Kidney (tissue), 22 donors: ENCODE measurements at regions of chr6 and their contacts with region 1.

Region 1: DNA sequence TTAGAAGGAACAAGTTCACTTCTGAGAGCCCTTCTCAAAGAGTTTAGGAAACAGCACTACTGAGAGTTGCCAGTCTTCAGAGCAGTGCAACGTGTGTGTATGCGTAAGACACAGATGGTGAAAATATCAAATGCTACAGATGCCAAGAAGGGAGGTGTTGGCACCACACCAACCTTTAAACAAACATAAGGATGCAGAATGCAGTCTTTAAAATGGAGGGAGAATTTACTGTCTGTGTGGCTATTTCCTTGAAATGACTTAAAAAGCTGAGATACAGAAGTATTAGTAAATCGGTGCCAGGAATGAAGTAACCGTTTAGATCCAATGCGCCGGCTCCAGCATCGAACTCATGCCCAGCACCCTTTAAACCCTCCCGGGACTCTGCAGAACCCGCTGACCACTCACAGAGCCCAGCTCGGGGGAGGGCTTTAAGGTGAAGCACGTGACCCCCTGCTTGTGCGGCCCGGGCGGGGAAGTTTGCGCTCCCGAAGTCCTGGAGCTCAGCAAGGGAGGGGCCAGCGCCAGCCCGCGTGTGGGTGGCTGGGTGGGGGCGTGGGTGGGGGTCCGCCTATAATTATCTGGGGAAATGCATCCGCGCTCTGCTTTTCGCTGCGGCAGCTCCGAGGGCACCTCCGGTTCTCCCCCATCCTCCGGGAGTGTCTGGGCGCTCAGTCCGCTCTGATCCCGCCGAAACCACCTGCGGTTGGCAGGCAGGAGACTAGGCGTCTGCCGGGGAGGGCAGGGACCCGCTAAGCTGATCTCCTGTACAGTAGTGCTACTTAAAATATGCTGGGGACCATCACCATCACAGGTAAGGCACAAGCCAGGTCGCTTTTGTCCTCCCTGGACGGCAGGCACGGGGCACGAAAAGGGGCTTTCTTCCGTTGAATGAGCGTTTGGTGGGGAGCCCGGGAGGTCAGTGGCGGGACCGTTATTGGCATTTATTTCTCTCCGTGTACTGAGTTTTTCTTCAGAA is 66.0 kb downstream of the ZBTB2 start:
- DNase-seq: peak; percentile 68 to 87 (median 76)
- H3K4me3 ChIP-seq: peak overlapping the region; percentile 58 to 73 (median 66)
- H3K27ac ChIP-seq: peak overlapping the region; percentile 44 to 68
- H3K4me1 ChIP-seq: peaks cover 0 to 8% (median 8%) of the 10 kb centered on the region in 3 donors
- H3K27me3 ChIP-seq: no peaks in the 10 kb centered on the region
- CTCF ChIP-seq: no peak

Region 2: GRCh38 chr6:150891888-150892485 is 433.4 kb before region 1 on chr6:
- intact Hi-C with region 1: loop called (anchors 5 kb)
- DNase-seq: peak in 4 of 5 donors; percentile 85 to 93 (median 88)
- H3K4me3 ChIP-seq: peak overlapping the region in 1 of 3 donors; percentile 1
- H3K27ac ChIP-seq: no peak overlapping the region
- H3K4me1 ChIP-seq: peaks cover 0 to 5% (median 3%) of the 10 kb centered on the region in 3 donors
- H3K27me3 ChIP-seq: no peaks in the 10 kb centered on the region
- CTCF ChIP-seq: peak; percentile 85

Region 3: GRCh38 chr6:151014404-151015100 is 310.8 kb before region 1 on chr6:
- intact Hi-C with region 1: loop called (anchors 5 kb)
- DNase-seq: peak; percentile 81 to 93 (median 87)
- H3K4me3 ChIP-seq: no peak overlapping the region
- H3K27ac ChIP-seq: peak overlapping the region in 1 of 2 donors; percentile 41
- H3K4me1 ChIP-seq: peaks cover 4% of the 10 kb centered on the region in 3 donors
- H3K27me3 ChIP-seq: no peaks in the 10 kb centered on the region
- CTCF ChIP-seq: peak; percentile 97

Region 4: DNA sequence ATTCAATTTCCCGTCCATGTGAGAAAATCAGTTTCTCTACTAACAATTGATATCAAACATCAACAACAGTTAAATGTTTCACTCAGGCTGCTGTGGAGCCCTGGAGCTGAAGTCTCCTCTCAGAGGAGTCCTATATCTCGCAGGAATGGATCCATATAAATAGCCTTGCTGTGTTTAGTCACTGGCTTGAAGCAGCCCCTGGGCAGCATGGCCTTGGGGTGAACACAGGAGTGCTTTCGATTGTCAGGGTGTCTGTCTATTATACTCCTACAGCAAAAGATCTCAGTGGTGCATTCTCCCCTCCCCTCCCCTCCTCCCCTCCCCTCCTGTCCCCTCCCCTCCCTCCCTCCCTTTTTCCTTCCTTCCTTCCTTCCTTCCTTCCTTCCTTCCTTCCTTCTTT is 310.4 kb after region 1 on chr6:
- intact Hi-C with region 1: no loop called
- DNase-seq: no peak
- H3K4me3 ChIP-seq: no peak overlapping the region
- H3K27ac ChIP-seq: no peak overlapping the region
- H3K4me1 ChIP-seq: no peaks in the 10 kb centered on the region
- H3K27me3 ChIP-seq: no peaks in the 10 kb centered on the region
- CTCF ChIP-seq: no peak